Prostate gland (tissue), 2 donors: ENCODE measurements at regions of chr12 and their contacts with region 1.

Region 1: GRCh38 chr12:122500685-122501488 is at the start of gene ZCCHC8:
- DNase-seq: peak; percentile 98
- H3K4me3 ChIP-seq: peak within 1 kb of the TSS; percentile 79 to 80
- H3K27ac ChIP-seq: peak within 1 kb of the TSS; percentile 98 to 99
- H3K4me1 ChIP-seq: no peaks in the 10 kb centered on the region
- H3K27me3 ChIP-seq: no peaks in the 10 kb centered on the region
- CTCF ChIP-seq: peak in 2 of 4 experiments; percentile 58 to 79
- POLR2A ChIP-seq: peak; percentile 99
- total RNA-seq, gene ZCCHC8: 17.3 to 20.1 TPM

Region 2: GRCh38 chr12:122021822-122022526 is 478.9 kb before region 1 on chr12 and contains the start of gene BCL7A:
- intact Hi-C with region 1: no loop called
- DNase-seq: peak; percentile 65
- H3K4me3 ChIP-seq: peak within 1 kb of the TSS; percentile 58
- H3K27ac ChIP-seq: peak within 1 kb of the TSS; percentile 85 to 91
- H3K4me1 ChIP-seq: peaks cover 8% of the 10 kb centered on the region
- H3K27me3 ChIP-seq: no peaks in the 10 kb centered on the region
- CTCF ChIP-seq: no peak
- POLR2A ChIP-seq: peak; percentile 74
- total RNA-seq, gene BCL7A: 10.3 to 15.4 TPM

Region 3: DNA sequence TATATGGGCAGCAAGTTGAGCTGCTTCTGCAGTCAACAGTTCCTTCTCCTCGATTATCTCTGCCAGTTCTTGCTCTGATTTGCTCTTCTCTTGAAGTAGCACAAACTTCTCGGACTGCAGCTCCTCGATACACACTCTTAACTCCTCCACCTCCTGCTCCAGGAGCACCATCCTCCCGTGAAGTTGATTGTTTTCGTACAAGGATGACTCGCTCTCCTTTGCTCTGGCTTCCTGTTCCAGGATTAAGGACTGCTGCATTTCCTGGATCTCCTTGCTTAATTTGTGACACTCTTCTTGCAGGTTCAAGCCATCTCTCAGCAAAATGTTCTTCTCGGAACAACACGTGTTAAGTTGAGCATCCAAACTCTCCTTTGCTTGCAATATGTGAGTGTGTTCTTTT is 178.4 kb before region 1 on chr12:
- intact Hi-C with region 1: no loop called
- DNase-seq: no peak
- H3K4me3 ChIP-seq: no peak overlapping the region
- H3K27ac ChIP-seq: no peak overlapping the region
- H3K4me1 ChIP-seq: no peaks in the 10 kb centered on the region
- H3K27me3 ChIP-seq: no peaks in the 10 kb centered on the region
- CTCF ChIP-seq: no peak
- POLR2A ChIP-seq: no peak

Region 4: DNA sequence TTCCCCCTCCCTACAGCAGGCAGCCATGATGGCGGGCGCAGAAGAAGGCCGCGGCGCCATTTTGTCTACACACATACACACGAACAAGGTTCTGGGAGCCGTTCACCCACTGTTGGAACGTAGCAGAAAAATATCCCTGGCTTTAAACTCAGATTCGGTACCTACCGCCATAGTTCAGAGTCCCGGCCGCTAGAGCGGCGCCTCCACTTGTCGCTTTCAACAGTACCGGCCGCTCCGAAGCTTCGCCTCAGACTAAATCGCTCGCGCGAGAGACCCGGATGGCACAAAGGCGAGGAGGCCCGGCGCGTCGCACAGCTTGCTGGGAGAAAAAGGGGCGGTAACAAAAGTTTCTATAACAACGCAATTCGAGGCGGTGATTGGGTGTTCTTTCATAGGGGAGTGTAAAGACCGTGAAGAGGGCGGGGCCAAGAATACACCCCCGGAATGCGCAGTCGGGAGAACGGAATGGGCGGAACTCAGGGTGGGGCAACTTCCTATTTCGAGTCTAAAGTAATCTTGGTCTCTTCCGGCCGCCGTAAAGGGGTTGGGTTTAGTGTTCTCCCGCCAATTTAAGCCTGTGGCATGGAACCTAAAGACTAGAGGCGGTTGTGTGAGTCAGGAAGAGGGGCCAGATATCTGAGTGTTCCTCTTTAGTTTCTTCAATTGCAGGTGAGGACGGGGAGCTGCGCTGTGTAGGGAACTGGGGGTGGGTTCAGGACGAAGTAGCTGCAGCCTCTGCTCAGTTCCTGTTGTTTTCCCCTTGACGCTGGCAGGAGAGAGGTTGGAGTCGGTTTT is 26.0 kb after region 1 on chr12 and contains the starts of genes KNTC1 and RSRC2:
- intact Hi-C with region 1: loop called (anchors 2 kb)
- DNase-seq: peak; percentile 99
- H3K4me3 ChIP-seq: peak within 1 kb of the TSS; percentile 66 to 77
- H3K27ac ChIP-seq: peak within 1 kb of the TSS; percentile 99
- H3K4me1 ChIP-seq: no peaks in the 10 kb centered on the region
- H3K27me3 ChIP-seq: no peaks in the 10 kb centered on the region
- CTCF ChIP-seq: peak in 2 of 4 experiments; percentile 5 to 9
- POLR2A ChIP-seq: peak; percentile 94
- total RNA-seq, gene KNTC1: 10.8 to 28.6 TPM
- total RNA-seq, gene RSRC2: 53.0 to 61.9 TPM